ENCODE measurements at regions of chr1 and their contacts with region 1.

Region 1: GRCh38 chr1:22801761-22802160 is 91.1 kb downstream of the EPHB2 start:
- DNase-seq: no peak
- ATAC-seq: no peak
- H3K4me3 Mint-ChIP-seq: no peak overlapping the region
- H3K27ac Mint-ChIP-seq: no peak overlapping the region
- H3K4me1 Mint-ChIP-seq: no peaks in the 10 kb centered on the region
- H3K27me3 Mint-ChIP-seq: no peaks in the 10 kb centered on the region

Region 2: DNA sequence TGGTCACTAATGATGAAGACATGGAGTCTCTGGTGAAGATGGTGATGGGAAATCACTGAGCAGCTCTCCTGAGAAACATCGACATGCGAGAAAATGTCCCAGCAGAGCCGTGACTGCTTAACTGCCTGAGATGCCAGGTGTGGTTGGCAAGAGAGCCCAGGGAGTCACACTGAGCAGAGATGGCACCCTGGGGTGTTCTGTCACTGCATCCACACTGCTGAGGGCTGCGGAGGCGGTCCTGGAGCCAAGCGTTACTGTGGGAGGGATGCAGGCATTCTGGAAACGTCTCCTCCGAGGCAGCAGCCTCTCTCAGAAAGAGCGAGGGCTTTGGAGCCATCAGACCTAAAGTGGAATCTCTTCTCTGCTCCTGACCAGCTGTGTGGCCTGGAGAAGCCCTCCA is 33.9 kb before region 1 on chr1:
- CTCF ChIA-PET with region 1: no interaction called
- POLR2A ChIA-PET with region 1: interaction called, 3 read pairs
- intact Hi-C with region 1: loop called in 1 of 2 experiments (anchors 1 kb)
- DNase-seq: no peak
- ATAC-seq: no peak
- H3K4me3 Mint-ChIP-seq: no peak overlapping the region
- H3K27ac Mint-ChIP-seq: no peak overlapping the region
- H3K4me1 Mint-ChIP-seq: no peaks in the 10 kb centered on the region
- H3K27me3 Mint-ChIP-seq: peaks cover 3% of the 10 kb centered on the region